Right cardiac atrium (tissue), 5 donors: ENCODE measurements at regions of chr15 and their contacts with region 1.

Region 1: DNA sequence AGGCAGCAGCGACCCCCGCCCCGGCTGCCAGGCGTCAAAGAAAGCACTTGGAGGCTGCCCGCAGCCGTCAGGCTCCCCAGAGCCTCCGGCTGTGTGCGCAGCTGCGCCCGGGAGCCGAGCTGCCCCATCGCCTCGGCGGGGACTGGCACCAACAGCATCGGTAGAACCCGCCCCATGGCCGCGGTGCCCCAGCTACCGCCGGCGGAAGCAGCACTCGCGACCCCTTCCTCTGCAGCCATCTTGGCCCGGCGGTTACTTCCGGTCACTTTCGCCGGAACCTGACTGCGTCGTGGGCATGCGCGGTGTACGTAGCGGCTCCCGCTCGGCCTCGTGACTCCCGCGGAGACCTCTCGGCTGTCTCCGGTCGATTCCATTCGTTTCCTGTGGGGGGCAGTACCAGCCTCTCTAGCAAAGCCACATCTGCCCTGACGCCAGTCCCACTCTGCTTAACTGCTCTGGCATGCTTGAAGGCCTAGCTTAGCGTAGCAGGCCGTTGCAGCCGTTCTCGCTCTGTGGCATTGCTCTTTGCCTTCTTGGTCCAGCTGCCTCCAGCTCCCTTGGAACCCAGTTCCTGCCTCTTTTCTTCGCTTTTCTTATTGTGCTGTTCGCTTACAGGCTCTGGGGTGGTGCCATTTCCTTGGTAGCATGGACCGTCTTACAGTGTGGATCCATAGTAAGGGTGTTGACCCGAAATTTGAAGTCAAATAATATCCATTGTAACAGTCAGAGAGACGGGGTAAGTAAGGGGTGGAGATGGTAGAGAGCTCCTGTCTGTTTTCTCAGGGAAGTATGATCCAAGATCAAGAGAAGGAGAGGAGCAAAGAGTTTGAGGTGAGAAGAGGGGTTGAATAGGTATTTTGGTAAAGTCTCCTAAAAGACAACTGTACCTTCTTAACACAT is at the start of gene SPG11:
- DNase-seq: peak; percentile 98 to 99 (median 99)
- ATAC-seq: peak; percentile 99
- H3K4me3 ChIP-seq: peak within 1 kb of the TSS; percentile 75
- H3K27ac ChIP-seq: peak within 1 kb of the TSS; percentile 91
- H3K4me1 ChIP-seq: no peaks in the 10 kb centered on the region
- H3K27me3 ChIP-seq: no peaks in the 10 kb centered on the region
- total RNA-seq, gene SPG11: 38.8 to 45.7 (median 42.4) TPM

Region 2: GRCh38 chr15:44738340-44738984 is 74.8 kb after region 1 on chr15:
- intact Hi-C with region 1: loop called in 3 of 4 experiments (anchors 5 kb)
- DNase-seq: no peak
- ATAC-seq: peak; percentile 26 to 31
- H3K4me3 ChIP-seq: no peak overlapping the region
- H3K27ac ChIP-seq: no peak overlapping the region
- H3K4me1 ChIP-seq: no peaks in the 10 kb centered on the region
- H3K27me3 ChIP-seq: no peaks in the 10 kb centered on the region